ENCODE measurements at regions of chr9 and their contacts with region 1.

Region 1: DNA sequence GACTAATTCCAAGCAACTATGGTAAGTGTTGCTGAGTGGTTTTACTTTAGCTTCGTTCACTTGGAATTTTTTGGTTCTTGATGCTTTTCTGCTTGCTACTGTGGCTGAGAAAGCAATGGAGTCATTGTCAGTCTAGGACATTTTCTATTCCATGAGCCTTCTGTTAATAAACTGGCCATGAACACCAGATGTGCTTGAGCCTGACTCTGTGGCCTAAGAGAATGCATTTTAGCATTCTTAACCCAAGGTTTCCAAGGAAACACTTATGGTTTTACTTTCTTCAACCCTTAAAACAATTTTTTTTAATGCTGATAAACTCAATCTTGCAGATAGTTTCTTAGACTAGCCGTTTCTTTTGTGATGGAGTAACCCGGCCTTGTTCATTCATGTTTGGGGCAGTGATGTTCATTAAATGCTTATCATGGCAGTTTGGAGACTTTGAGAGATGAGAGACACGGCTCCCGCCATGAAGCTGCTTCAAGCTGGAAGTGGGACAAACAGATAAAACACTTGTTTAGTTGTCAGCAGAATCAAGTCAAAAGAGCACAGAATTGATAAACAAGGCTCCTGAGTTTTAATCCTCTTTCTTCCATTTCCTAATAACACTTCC is 42.4 kb downstream of the OSTF1 start:
- DNase-seq: no peak
- ATAC-seq: no peak
- H3K4me3 ChIP-seq: no peak overlapping the region
- H3K4me3 Mint-ChIP-seq: no peak overlapping the region
- H3K27ac ChIP-seq: no peak overlapping the region
- H3K27ac Mint-ChIP-seq: peak overlapping the region; percentile 65
- H3K4me1 ChIP-seq: peaks cover 6% of the 10 kb centered on the region
- H3K4me1 Mint-ChIP-seq: peaks cover 68% of the 10 kb centered on the region
- H3K27me3 ChIP-seq: no peaks in the 10 kb centered on the region
- H3K27me3 Mint-ChIP-seq: no peaks in the 10 kb centered on the region
- CTCF ChIP-seq: no peak

Region 2: DNA sequence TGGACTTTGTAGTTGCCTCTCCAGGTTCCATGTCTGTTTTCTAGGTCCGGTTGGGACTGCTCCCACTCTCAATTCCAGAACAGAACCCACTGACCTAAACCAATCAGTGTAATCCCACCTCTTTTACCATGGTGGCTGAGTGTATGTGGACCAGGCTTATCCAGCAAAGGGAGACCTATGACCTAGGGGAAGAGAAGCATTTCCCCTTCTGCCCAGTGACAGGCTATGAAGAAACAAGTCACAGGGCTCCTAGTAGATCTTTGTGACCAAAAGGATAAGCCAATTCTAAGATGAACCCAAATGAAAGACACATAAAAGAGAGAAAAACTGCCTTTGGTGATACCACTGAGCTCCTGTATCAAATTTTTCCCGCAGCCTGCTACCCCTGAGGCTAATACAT is 49.1 kb before region 1 on chr9:
- CTCF ChIA-PET with region 1: no interaction called
- POLR2A ChIA-PET with region 1: no interaction called
- intact Hi-C with region 1: no loop called
- DNase-seq: no peak
- ATAC-seq: no peak
- H3K4me3 ChIP-seq: no peak overlapping the region
- H3K4me3 Mint-ChIP-seq: no peak overlapping the region
- H3K27ac ChIP-seq: no peak overlapping the region
- H3K27ac Mint-ChIP-seq: peak overlapping the region; percentile 88
- H3K4me1 ChIP-seq: peaks cover 34% of the 10 kb centered on the region
- H3K4me1 Mint-ChIP-seq: peaks cover 60% of the 10 kb centered on the region
- H3K27me3 ChIP-seq: no peaks in the 10 kb centered on the region
- H3K27me3 Mint-ChIP-seq: no peaks in the 10 kb centered on the region
- CTCF ChIP-seq: no peak

Region 3: DNA sequence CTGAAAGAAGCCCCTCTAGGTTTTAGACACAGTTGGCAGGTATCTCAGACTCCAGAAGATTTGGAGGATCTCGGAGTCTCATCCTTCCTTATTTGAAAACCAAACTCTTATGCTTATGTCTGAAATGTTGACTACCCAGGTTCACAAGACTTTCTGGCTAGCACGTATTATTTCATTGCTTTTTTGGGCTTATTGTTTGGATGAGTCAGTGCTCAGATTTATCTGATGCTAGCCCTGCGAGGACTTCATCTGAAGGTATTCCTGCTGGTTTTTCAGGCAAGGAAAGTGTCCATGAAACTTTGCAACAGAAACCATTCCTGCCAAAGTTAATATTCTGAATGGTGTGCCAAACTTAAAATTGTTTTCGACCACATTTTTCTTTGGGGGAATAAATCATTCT is 33.9 kb before region 1 on chr9:
- CTCF ChIA-PET with region 1: no interaction called
- POLR2A ChIA-PET with region 1: no interaction called
- intact Hi-C with region 1: loop called in 1 of 2 experiments (anchors 5 kb)
- DNase-seq: no peak
- ATAC-seq: no peak
- H3K4me3 ChIP-seq: no peak overlapping the region
- H3K4me3 Mint-ChIP-seq: no peak overlapping the region
- H3K27ac ChIP-seq: no peak overlapping the region
- H3K27ac Mint-ChIP-seq: peak overlapping the region; percentile 69
- H3K4me1 ChIP-seq: peaks cover 41% of the 10 kb centered on the region
- H3K4me1 Mint-ChIP-seq: peaks cover 81% of the 10 kb centered on the region
- H3K27me3 ChIP-seq: no peaks in the 10 kb centered on the region
- H3K27me3 Mint-ChIP-seq: no peaks in the 10 kb centered on the region
- CTCF ChIP-seq: no peak

Region 4: GRCh38 chr9:75148561-75148960 is 17.8 kb after region 1 on chr9:
- CTCF ChIA-PET with region 1: interaction called, 4 read pairs
- POLR2A ChIA-PET with region 1: interaction called, 26 read pairs
- intact Hi-C with region 1: no loop called
- DNase-seq: peak in 2 of 14 experiments; percentile 27 to 47
- ATAC-seq: no peak
- H3K4me3 ChIP-seq: no peak overlapping the region
- H3K4me3 Mint-ChIP-seq: peak overlapping the region; percentile 83
- H3K27ac ChIP-seq: peak overlapping the region; percentile 29 to 47
- H3K27ac Mint-ChIP-seq: peak overlapping the region; percentile 92
- H3K4me1 ChIP-seq: peaks cover 55% of the 10 kb centered on the region
- H3K4me1 Mint-ChIP-seq: peaks cover 91% of the 10 kb centered on the region
- H3K27me3 ChIP-seq: no peaks in the 10 kb centered on the region
- H3K27me3 Mint-ChIP-seq: no peaks in the 10 kb centered on the region
- CTCF ChIP-seq: no peak

Region 5: GRCh38 chr9:75775966-75776691 is 645.4 kb after region 1 on chr9:
- CTCF ChIA-PET with region 1: no interaction called
- POLR2A ChIA-PET with region 1: no interaction called
- intact Hi-C with region 1: no loop called
- DNase-seq: no peak
- ATAC-seq: no peak
- H3K4me3 ChIP-seq: no peak overlapping the region
- H3K4me3 Mint-ChIP-seq: no peak overlapping the region
- H3K27ac ChIP-seq: no peak overlapping the region
- H3K27ac Mint-ChIP-seq: no peak overlapping the region
- H3K4me1 ChIP-seq: no peaks in the 10 kb centered on the region
- H3K4me1 Mint-ChIP-seq: no peaks in the 10 kb centered on the region
- H3K27me3 ChIP-seq: no peaks in the 10 kb centered on the region
- H3K27me3 Mint-ChIP-seq: peaks cover 5% of the 10 kb centered on the region
- CTCF ChIP-seq: no peak